B cell (primary cell): ENCODE measurements at regions of chr2 and their contacts with region 1.

Region 1: GRCh38 chr2:75403991-75404428 is 156.7 kb downstream of the EVA1A start:
- DNase-seq: peak; percentile 65
- ATAC-seq: peak; percentile 83
- H3K4me3 ChIP-seq: no peak overlapping the region
- H3K4me3 Mint-ChIP-seq: no peak overlapping the region
- H3K27ac ChIP-seq: no peak overlapping the region
- H3K27ac Mint-ChIP-seq: no peak overlapping the region
- H3K4me1 ChIP-seq: no peaks in the 10 kb centered on the region
- H3K4me1 Mint-ChIP-seq: peaks cover 19% of the 10 kb centered on the region
- H3K27me3 ChIP-seq: no peaks in the 10 kb centered on the region
- H3K27me3 Mint-ChIP-seq: no peaks in the 10 kb centered on the region
- CTCF ChIP-seq: peak; percentile 95

Region 2: GRCh38 chr2:74919827-74920226 is 484.2 kb before region 1 on chr2:
- CTCF ChIA-PET with region 1: interaction called, 22 read pairs
- POLR2A ChIA-PET with region 1: no interaction called
- intact Hi-C with region 1: loop called (anchors 1 kb)
- DNase-seq: peak; percentile 79
- ATAC-seq: peak; percentile 88
- H3K4me3 ChIP-seq: peak overlapping the region in 1 of 5 experiments; percentile 21
- H3K4me3 Mint-ChIP-seq: peak overlapping the region; percentile 68
- H3K27ac ChIP-seq: no peak overlapping the region
- H3K27ac Mint-ChIP-seq: peak overlapping the region; percentile 15
- H3K4me1 ChIP-seq: peaks cover 3 to 7% of the 10 kb centered on the region in 2 donors
- H3K4me1 Mint-ChIP-seq: peaks cover 27% of the 10 kb centered on the region
- H3K27me3 ChIP-seq: peaks cover 0 to 6% (median 0%) of the 10 kb centered on the region in 4 experiments
- H3K27me3 Mint-ChIP-seq: peaks cover 18% of the 10 kb centered on the region
- CTCF ChIP-seq: peak; percentile 96

Region 3: DNA sequence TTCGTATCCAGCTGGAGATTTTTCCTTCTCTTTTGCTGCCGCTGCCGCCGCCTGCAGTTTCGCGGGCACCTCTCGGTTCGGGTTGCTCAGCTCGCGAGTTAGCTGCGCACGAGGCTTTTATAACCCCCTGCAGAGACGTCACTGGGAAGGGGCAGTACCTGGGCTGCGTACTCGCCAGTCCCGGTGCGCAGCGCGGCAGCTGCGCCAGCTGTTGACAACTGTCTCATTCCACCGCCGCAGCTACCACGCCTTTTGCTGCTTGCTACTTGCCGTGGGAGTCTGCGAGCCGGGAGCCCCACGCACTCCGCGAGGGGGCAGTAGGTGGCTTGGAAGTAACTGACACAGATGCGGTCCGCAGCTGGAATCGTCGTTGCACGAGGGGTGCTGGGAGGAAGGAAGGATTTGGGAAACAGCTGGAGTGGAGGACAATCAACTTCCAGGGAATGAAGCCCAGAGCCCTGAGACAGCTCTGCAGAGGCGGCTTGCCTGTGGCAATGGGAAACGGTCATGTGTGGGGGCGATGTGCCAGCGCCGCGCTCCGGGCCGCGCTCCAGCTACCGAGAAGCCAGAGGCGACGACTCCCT is 204.5 kb before region 1 on chr2 and contains the start of gene TACR1:
- CTCF ChIA-PET with region 1: interaction called, 28 read pairs
- POLR2A ChIA-PET with region 1: no interaction called
- intact Hi-C with region 1: loop called (anchors 1 kb)
- DNase-seq: peak; percentile 70
- ATAC-seq: peak; percentile 71
- H3K4me3 ChIP-seq: peak within 1 kb of the TSS in 4 of 5 experiments; percentile 9 to 49 (median 36)
- H3K4me3 Mint-ChIP-seq: peak within 1 kb of the TSS; percentile 91
- H3K27ac ChIP-seq: no peak within 1 kb of the TSS
- H3K27ac Mint-ChIP-seq: no peak within 1 kb of the TSS
- H3K4me1 ChIP-seq: peaks cover 22 to 23% of the 10 kb centered on the region in 2 donors
- H3K4me1 Mint-ChIP-seq: peaks cover 23% of the 10 kb centered on the region
- H3K27me3 ChIP-seq: peaks cover 0 to 41% (median 31%) of the 10 kb centered on the region in 4 experiments
- H3K27me3 Mint-ChIP-seq: peaks cover 57% of the 10 kb centered on the region
- CTCF ChIP-seq: peak; percentile 65
- total RNA-seq, gene TACR1: 0.05 TPM in 1 of 2 replicates, not detected in the other

Region 4: DNA sequence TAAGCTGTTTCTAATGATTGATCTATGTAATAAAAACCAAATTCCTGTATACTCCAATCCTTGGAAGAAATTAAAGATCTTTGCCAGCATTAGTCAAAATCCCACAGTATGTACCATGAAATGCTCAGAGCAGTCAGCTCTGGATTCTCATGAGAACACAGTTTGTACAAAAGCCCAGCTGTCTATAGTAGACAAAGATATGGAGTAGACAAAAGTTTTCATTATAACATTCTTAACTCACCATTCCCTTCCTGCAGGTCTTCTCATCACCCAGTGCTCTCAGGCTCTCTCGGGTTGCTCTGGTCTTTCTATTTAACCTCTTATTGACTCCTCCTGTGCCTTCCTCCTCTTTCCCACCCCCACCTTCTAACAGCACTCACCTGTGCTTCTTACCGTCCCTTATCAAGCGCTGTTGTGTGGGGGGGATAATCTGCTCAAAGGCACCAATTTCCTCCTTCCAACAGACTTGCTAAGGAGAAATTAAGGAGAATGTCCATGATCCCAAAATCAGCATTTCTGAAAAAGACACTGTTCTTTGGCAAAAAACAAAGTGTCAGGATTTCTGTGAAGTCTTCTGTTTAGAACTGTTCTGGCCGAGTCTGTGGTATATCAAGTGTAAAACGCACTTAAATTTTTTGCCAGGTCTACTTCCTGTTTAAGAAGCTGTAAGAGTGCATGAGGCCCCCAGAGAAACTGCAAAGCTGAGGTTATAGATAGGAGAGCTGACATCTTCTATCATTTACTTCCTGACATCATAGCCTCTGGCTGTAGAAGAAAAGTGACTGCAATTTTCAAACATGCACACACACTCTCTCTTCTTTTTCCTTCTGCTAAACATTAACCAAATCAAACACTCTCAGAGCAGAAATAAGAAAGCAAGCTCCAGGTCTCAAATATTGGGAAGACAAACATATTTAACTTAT is 12.7 kb after region 1 on chr2:
- CTCF ChIA-PET with region 1: interaction called, 14 read pairs
- POLR2A ChIA-PET with region 1: interaction called, 3 read pairs
- intact Hi-C with region 1: loop called (anchors 1 kb)
- DNase-seq: peak; percentile 55
- ATAC-seq: peak; percentile 93
- H3K4me3 ChIP-seq: peak overlapping the region; percentile 42 to 72 (median 61)
- H3K4me3 Mint-ChIP-seq: peak overlapping the region; percentile 93
- H3K27ac ChIP-seq: peak overlapping the region; percentile 57 to 78
- H3K27ac Mint-ChIP-seq: peak overlapping the region; percentile 94
- H3K4me1 ChIP-seq: peaks cover 24 to 25% of the 10 kb centered on the region in 2 donors
- H3K4me1 Mint-ChIP-seq: peaks cover 49% of the 10 kb centered on the region
- H3K27me3 ChIP-seq: no peaks in the 10 kb centered on the region
- H3K27me3 Mint-ChIP-seq: peaks cover 2% of the 10 kb centered on the region
- CTCF ChIP-seq: no peak

Region 5: GRCh38 chr2:75646583-75647425 is 242.8 kb after region 1 on chr2 and contains the start of gene MRPL19:
- CTCF ChIA-PET with region 1: no interaction called
- POLR2A ChIA-PET with region 1: no interaction called
- intact Hi-C with region 1: no loop called
- DNase-seq: peak; percentile 86
- ATAC-seq: peak; percentile 96
- H3K4me3 ChIP-seq: peak within 1 kb of the TSS; percentile 68 to 95 (median 74)
- H3K4me3 Mint-ChIP-seq: peak within 1 kb of the TSS; percentile 97
- H3K27ac ChIP-seq: peak within 1 kb of the TSS; percentile 56 to 79
- H3K27ac Mint-ChIP-seq: peak within 1 kb of the TSS; percentile 94
- H3K4me1 ChIP-seq: peaks cover 7 to 12% of the 10 kb centered on the region in 2 donors
- H3K4me1 Mint-ChIP-seq: peaks cover 25% of the 10 kb centered on the region
- H3K27me3 ChIP-seq: no peaks in the 10 kb centered on the region
- H3K27me3 Mint-ChIP-seq: no peaks in the 10 kb centered on the region
- CTCF ChIP-seq: no peak
- total RNA-seq, gene MRPL19: 28.4 and 36.7 TPM in 2 replicates